Activated CD4-positive, alpha-beta T cell treated with anti-CD3 and anti-CD28 coated beads, Interleukin-2, amount 10 ng/mL, durations not matched to agents 24 days and 14 days (primary cell): ENCODE measurements at regions of chr19 and their contacts with region 1.

Region 1: DNA sequence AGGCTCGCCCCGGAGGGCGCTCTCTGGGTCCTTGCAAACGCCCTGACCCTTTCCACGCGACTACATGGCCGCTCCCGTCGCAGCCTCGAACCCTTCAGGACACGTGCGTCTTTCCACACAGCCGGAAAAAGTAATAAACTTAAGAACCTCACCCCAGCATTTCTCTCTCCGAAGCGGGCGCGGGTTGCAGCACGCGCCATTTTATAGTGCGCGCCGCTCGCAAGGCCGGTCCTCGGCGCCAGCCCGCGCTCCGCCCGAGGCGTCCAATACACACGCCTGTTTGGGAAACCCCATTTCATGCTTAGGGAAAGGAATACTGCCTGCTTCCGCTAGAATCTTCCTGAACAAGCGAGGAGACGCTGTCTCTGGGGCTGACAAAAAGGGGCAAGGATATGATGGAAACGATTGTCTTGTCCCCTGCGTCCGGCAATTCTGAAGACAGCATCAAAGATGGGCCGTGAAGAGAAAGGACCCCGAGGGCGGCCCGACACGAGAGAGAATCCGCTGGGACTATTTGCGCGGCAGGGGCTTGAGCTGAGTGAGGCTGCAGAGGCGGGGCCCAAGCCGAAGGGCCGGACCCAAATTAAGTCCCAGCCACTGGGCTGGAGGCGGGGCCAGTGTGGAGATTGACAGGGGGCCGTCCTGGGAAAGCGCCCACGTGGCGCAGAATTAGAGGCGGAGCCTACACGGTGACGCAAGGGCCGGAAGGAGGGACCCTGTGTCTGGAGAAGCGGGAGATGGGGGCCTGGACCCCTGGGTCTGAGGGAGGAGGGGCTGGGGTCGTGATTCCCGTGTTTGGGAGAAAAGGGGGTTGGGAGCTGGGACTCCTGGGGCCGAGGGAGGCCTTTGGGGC is 14.4 kb downstream of the ACP4 start:
- DNase-seq: peak; percentile 99
- H3K4me3 Mint-ChIP-seq: peak overlapping the region; percentile 96
- H3K27ac Mint-ChIP-seq: peak overlapping the region; percentile 97
- H3K4me1 Mint-ChIP-seq: peaks cover 30% of the 10 kb centered on the region
- H3K27me3 Mint-ChIP-seq: no peaks in the 10 kb centered on the region

Region 2: DNA sequence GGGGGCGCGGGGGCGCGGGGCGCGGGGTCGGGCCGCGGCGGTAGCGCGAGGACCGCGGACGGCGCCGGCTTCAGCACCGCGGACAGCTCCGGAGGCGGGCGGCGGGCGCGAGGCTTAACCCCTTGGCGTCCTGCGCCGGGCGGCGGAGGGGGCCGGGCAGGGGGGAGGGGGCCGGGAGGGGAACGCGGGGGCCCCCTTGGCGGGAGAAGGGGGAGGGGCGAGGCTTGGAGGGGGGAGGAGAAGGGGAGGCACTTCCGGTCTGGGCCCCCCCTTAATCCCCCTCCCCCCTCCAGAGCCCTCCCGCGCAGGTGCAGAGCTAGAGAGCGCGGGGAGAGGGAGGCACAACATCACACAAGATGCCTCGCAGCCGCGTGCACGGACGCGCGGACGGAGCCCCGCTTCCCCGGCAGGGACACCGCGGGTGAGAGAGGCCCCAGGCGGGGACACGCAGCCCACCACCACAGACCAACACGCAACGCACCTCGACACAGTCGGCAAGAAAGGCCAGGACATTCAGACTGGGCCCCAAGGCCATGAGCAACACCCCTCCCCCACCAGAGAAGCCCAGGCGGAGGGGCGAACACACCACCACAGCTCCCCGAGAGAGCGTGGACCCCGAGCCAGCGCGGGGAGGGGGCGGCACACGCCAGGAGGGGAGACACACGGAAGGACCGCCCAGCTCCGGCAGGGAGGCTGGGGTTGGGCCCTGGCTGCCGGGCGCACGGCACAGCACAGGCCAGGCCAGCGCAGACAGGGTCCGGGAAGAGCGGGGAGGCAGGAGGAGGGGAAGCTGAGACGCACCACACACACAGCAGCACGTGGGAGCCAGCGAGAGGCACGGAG is 109.2 kb before region 1 on chr19:
- intact Hi-C with region 1: no loop called
- DNase-seq: peak; percentile 82
- H3K4me3 Mint-ChIP-seq: no peak overlapping the region
- H3K27ac Mint-ChIP-seq: no peak overlapping the region
- H3K4me1 Mint-ChIP-seq: no peaks in the 10 kb centered on the region
- H3K27me3 Mint-ChIP-seq: peaks cover 30% of the 10 kb centered on the region

Region 3: GRCh38 chr19:50794439-50795237 is 10.0 kb before region 1 on chr19:
- intact Hi-C with region 1: loop called (anchors 1 kb)
- DNase-seq: peak; percentile 66
- H3K4me3 Mint-ChIP-seq: no peak overlapping the region
- H3K27ac Mint-ChIP-seq: no peak overlapping the region
- H3K4me1 Mint-ChIP-seq: peaks cover 4% of the 10 kb centered on the region
- H3K27me3 Mint-ChIP-seq: no peaks in the 10 kb centered on the region

Region 4: GRCh38 chr19:50817941-50818858 is 13.6 kb after region 1 on chr19:
- intact Hi-C with region 1: loop called (anchors 1 kb)
- DNase-seq: peak; percentile 92
- H3K4me3 Mint-ChIP-seq: peak overlapping the region; percentile 77
- H3K27ac Mint-ChIP-seq: peak overlapping the region; percentile 71
- H3K4me1 Mint-ChIP-seq: peaks cover 35% of the 10 kb centered on the region
- H3K27me3 Mint-ChIP-seq: peaks cover 38% of the 10 kb centered on the region

Region 5: DNA sequence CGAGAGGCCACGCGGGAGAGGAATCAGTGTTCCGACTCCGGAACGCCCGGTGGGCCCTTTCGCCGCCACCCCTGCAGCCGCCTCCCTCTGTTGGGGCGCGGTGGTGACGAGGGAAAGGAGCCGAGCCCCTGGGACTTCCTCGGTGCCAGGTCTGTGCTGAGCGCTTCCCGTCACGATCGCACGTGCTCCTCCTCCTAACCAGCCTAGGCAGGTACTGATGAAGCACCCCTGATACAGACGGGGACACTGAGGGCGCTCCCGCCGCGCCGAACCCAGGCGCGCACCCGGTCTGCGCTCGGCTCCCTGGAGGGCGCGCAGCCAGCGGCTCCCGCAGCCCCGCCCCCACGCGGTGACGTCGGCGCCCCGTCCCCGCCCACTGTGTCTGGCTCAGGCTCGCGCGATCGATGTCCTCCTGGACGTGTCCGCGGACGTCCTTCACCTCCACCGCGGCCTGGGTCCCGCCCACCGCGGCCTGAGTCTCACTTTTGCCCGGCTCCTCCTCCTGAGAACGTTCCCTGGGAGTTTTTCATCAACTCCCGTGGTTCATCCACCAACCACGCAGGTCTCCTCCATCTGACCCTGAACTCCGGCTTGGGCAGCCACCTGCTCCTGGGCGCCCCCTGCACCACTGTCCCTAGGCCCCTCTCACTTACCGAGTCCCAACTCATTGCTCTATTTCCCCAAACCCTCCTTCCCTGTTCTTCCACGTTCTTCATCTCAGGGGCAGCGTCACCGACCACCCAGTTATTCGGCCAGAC is 31.3 kb after region 1 on chr19:
- intact Hi-C with region 1: loop called (anchors 5 kb)
- DNase-seq: peak; percentile 96
- H3K4me3 Mint-ChIP-seq: peak overlapping the region; percentile 88
- H3K27ac Mint-ChIP-seq: peak overlapping the region; percentile 58
- H3K4me1 Mint-ChIP-seq: peaks cover 15% of the 10 kb centered on the region
- H3K27me3 Mint-ChIP-seq: peaks cover 40% of the 10 kb centered on the region

Region 6: DNA sequence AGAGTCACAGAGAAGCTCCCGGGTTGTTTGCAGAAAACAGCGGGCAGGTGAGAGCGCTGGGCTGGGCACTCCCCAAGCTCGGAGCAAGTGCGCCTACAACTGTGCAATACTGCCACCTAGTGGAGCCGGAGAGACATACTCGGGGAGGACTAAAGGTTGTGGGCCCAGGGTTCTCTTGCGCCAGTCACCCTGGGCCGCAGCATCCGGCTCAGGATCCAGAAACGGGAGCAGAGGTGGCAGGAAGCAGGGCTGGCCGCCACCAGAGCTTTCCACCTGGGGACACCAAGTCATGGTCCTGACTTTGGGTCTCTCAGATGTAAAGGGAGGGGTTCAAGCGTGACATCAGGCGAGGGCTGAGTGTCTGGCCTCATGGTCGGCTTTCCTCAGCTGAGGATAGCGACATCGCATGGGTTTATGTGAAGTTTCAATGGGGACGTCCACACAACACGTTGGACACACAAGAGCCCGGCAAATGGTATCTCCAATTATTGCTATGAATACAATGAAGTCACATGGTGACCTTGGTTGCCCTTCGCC is 117.7 kb after region 1 on chr19:
- intact Hi-C with region 1: loop called (anchors 5 kb)
- DNase-seq: peak; percentile 93
- H3K4me3 Mint-ChIP-seq: no peak overlapping the region
- H3K27ac Mint-ChIP-seq: peak overlapping the region; percentile 26
- H3K4me1 Mint-ChIP-seq: peaks cover 11% of the 10 kb centered on the region
- H3K27me3 Mint-ChIP-seq: peaks cover 15% of the 10 kb centered on the region

Region 7: GRCh38 chr19:51108066-51108804 is 303.6 kb after region 1 on chr19 and contains the start of gene CTU1:
- intact Hi-C with region 1: loop called (anchors 10 kb)
- DNase-seq: peak; percentile 99
- H3K4me3 Mint-ChIP-seq: peak within 1 kb of the TSS; percentile 87
- H3K27ac Mint-ChIP-seq: peak within 1 kb of the TSS; percentile 93
- H3K4me1 Mint-ChIP-seq: peaks cover 24% of the 10 kb centered on the region
- H3K27me3 Mint-ChIP-seq: no peaks in the 10 kb centered on the region
- total RNA-seq, gene CTU1: 12.8 and 13.4 TPM in 2 replicates